Activated naive CD4-positive, alpha-beta T cell treated with anti-CD3 and anti-CD28 coated beads, Interleukin-2, amount 10 ng/mL, durations not matched to agents 7 days and 5 days (primary cell): ENCODE measurements at regions of chr3 and their contacts with region 1.

Region 1: DNA sequence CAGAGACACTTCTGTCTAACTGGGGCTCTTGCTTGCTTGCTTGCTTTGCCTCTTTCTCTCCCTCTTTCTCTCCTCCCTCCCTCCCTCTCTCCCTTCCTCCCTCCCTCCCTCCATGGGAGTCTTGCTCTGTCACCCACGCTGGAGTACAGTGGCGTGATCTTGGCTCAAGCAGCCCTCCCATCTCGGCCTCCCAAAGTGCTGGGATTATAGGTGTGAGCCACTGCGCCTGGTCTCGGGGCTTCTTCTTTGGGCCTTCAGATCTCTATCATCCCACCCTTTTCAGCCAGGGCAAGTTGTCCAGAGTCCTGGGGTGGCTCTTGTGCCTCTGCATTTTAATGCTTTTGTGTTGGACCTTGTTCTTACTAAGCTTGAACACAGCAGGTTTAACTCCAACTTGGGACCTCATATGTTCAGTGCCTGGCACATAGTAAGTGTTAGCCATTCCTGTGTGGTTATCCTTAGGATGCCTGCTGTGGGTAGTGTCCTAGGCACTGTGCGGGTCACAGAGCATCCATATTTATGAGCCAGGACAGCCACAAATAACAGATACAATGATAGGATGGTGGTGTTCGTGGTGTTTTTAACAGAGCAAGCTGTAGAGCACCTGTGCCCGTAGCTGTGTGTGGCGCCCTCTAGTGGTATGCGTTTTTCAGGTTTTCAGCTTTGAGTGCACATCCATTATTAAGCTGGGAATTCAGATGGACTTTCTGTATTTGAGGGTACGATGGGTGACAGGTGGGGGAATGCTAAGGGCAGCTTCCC is 75.1 kb downstream of the CCK start:
- DNase-seq: peak; percentile 82
- H3K4me3 Mint-ChIP-seq: no peak overlapping the region
- H3K27ac Mint-ChIP-seq: peak overlapping the region; percentile 64
- H3K4me1 Mint-ChIP-seq: peaks cover 47% of the 10 kb centered on the region
- H3K27me3 Mint-ChIP-seq: no peaks in the 10 kb centered on the region

Region 2: GRCh38 chr3:42118762-42119361 is 72.0 kb before region 1 on chr3:
- CTCF ChIA-PET with region 1: interaction called, 126 read pairs
- DNase-seq: peak; percentile 51
- H3K4me3 Mint-ChIP-seq: no peak overlapping the region
- H3K27ac Mint-ChIP-seq: no peak overlapping the region
- H3K4me1 Mint-ChIP-seq: peaks cover 18% of the 10 kb centered on the region
- H3K27me3 Mint-ChIP-seq: no peaks in the 10 kb centered on the region

Region 3: GRCh38 chr3:42172047-42172654 is 18.7 kb before region 1 on chr3:
- CTCF ChIA-PET with region 1: interaction called, 11 read pairs
- DNase-seq: no peak
- H3K4me3 Mint-ChIP-seq: no peak overlapping the region
- H3K27ac Mint-ChIP-seq: peak overlapping the region; percentile 95
- H3K4me1 Mint-ChIP-seq: peaks cover 48% of the 10 kb centered on the region
- H3K27me3 Mint-ChIP-seq: no peaks in the 10 kb centered on the region

Region 4: DNA sequence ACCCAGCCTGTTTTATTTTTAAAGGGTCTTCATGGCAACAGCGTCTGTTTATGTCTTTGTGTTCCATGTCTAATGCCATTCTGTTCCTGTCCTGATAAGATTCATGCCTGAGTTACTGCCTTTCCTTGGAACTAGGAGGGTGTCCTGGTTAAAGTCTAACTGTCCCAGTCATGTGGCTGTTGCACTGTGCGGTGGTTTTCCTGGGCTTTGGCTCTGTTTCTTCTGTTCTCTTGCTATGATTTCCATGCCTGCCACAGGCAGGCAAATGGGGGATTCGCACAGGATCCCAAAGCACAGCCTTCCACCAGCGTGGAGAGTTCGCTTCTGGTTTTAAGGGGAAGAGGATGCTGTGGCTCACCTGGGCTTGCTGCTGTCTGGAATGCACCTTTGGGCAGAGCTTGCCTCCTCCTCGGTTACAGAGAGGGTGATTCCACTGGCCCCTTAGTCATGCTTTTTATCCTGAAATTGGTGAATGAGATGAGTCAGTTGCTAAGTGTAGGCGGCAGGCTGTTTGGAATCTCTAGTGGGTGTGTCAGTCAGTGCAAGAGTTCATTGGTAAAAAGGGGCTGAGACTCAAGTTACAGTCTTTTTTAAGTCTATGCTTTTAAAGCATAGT is 11.7 kb before region 1 on chr3:
- CTCF ChIA-PET with region 1: interaction called, 35 read pairs
- DNase-seq: no peak
- H3K4me3 Mint-ChIP-seq: no peak overlapping the region
- H3K27ac Mint-ChIP-seq: no peak overlapping the region
- H3K4me1 Mint-ChIP-seq: peaks cover 9% of the 10 kb centered on the region
- H3K27me3 Mint-ChIP-seq: no peaks in the 10 kb centered on the region

Region 5: DNA sequence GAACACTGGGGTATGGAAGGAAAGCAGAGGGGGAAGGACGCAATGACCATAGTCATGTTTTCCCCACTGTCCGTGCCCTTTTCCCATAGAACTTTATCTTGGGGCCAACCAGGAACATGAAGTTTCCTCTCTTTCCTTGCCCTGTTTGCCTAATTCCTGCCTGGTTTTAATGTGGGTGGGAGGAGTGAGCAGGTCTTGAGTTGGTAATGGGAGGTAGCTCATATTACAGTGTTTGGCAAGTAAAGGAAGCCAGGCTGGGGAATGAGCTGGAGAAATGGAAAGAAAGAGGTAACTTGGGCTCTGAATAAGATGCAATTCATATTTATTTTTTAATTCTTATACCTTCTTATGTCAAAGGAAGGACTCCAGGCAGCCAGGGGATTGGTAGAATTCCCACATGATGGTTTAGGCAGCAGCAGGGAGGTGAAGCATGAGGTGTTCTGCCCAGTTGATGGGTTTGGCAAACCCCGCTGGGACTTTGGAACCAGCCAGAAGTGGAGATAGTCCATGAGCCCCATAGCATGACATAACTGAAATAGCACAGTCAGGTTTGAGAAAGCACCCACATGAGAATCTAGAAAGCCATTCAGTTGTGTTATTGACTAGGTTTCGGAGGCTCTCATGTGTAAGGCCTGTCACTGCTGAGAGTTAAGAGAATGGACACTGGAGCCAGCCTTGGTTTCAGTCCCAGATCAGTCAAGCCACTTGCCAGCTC is 15.1 kb after region 1 on chr3:
- CTCF ChIA-PET with region 1: interaction called, 10 read pairs
- DNase-seq: no peak
- H3K4me3 Mint-ChIP-seq: no peak overlapping the region
- H3K27ac Mint-ChIP-seq: no peak overlapping the region
- H3K4me1 Mint-ChIP-seq: no peaks in the 10 kb centered on the region
- H3K27me3 Mint-ChIP-seq: no peaks in the 10 kb centered on the region

Region 6: DNA sequence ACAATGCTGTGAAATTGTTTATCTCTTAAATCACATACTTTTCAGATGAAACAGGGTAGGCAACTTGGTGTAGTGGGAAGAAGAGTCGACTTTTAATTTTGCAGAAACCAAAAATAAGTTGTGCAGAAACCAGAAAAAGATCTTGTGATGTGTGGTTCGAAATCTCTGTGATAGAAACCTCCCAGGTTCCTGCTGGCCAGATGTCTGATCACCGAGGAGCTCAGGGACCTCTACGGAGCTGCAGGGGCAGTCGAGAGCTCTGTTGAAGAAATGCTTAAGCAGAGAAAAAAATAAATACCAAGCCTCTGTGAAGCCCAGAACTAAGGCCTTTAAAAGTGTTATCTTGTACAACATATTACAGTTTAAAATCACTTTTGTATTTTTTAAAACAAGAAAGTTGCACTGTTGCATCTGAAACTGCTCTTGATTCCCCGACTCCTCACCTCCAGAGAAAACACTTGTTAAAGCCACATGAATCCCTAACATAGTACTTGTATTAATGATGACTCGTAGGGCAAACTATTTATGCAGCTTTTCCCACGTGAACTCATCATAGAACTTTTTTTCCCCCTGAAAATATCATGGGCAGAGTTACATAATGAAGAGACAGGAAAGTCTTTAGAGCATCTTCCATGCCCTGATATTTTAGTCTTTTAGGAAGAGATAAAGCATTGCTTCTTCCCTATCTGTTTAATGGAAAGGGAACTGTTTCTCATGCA is 23.8 kb after region 1 on chr3:
- CTCF ChIA-PET with region 1: interaction called, 10 read pairs
- DNase-seq: no peak
- H3K4me3 Mint-ChIP-seq: no peak overlapping the region
- H3K27ac Mint-ChIP-seq: peak overlapping the region; percentile 82
- H3K4me1 Mint-ChIP-seq: peaks cover 68% of the 10 kb centered on the region
- H3K27me3 Mint-ChIP-seq: no peaks in the 10 kb centered on the region

Region 7: DNA sequence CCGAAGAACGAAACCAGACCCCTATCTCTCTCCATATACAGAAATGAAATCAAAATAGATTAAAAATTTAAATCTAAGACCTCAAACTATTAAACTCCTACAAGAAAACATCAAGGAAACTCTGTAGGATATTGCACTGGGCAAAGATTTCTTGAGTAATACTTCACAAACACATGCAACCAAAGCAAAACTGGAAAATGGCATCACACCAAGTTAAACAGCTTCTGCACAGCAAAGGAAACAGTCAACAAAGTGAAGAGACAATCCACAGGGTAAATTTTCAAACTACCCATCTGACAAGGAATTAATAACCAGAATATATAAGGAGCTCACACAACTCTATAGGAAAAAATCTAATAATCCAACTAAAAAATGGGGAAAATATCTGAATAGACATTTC is 45.7 kb after region 1 on chr3:
- CTCF ChIA-PET with region 1: no interaction called
- DNase-seq: no peak
- H3K4me3 Mint-ChIP-seq: no peak overlapping the region
- H3K27ac Mint-ChIP-seq: no peak overlapping the region
- H3K4me1 Mint-ChIP-seq: no peaks in the 10 kb centered on the region
- H3K27me3 Mint-ChIP-seq: peaks cover 27% of the 10 kb centered on the region

Region 8: DNA sequence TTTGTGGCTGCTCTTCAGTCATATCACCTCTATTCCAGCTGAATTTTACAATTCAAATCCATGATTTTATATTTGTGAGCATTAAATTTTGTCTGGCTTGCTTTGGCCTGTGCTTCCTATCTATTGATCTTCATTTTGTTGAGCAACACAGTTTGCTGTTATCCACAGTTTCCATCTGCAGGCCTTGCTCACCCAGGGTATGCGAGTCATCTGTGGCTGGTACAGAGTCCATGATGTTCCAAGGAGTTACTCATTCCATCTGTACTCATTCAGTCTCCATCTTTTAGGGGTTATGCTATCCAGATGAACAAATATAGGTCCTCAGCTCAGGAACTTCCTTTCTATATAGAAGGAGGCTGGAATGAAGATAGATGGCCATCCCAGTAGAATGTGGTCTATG is 145.2 kb after region 1 on chr3:
- CTCF ChIA-PET with region 1: no interaction called
- DNase-seq: no peak
- H3K4me3 Mint-ChIP-seq: no peak overlapping the region
- H3K27ac Mint-ChIP-seq: no peak overlapping the region
- H3K4me1 Mint-ChIP-seq: no peaks in the 10 kb centered on the region
- H3K27me3 Mint-ChIP-seq: peaks cover 6% of the 10 kb centered on the region